Activated T-helper 1 cell treated with anti-CD3 and anti-CD28 coated beads, Interleukin-12 subunit alpha, Interleukin-12 subunit beta, Interleukin-2, Interleukin-4 antibody, amounts not matched to agents 30 ng/mL and 10 ng/mL and 1 ng/mL, durations not matched to agents 14 hours and 24 hours and 36 hours (primary cell): ENCODE measurements at regions of chr5 and their contacts with region 1.

Region 1: DNA sequence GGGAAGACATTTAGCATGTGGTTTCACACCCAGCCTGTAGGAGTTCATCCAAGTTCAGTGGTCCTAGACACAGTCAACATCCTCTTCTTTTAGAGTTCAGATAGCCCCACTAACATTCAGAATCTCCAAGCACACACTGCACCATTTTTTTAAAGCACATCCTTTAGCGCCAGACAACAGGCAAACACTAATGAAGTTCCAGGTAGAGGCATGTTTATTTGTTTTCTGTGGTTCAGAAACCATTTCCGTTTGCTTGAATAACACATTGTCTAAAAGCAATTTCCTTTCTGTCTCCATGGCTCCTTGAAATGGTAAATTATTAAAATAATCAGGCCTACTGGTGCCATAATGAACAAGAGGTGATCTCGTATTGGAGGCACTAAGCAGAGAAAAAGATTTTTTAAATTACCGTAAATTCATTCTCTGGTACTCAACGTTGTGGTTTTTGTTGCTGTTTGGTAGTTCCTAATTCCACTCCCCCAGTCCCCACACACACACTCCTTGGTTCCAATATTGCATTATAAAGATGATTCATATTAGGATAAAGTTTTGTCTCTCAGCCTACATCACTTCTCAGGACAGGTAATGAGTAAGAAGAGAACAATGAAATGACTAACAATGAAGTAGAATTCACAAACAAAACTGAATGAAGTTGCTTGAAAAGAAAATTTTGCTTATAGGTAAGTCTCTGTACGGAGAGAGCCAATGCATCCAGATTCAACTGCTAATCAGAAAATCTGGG is 153.1 kb downstream of the PCSK1 start:
- DNase-seq: peak; percentile 14
- H3K4me3 Mint-ChIP-seq: peak overlapping the region; percentile 27
- H3K27ac Mint-ChIP-seq: peak overlapping the region; percentile 56
- H3K4me1 Mint-ChIP-seq: peaks cover 40% of the 10 kb centered on the region
- H3K27me3 Mint-ChIP-seq: peaks cover 4% of the 10 kb centered on the region

Region 2: GRCh38 chr5:95927927-95928723 is 351.8 kb before region 1 on chr5:
- intact Hi-C with region 1: loop called (anchors 1 kb)
- DNase-seq: no peak
- H3K4me3 Mint-ChIP-seq: peak overlapping the region; percentile 67
- H3K27ac Mint-ChIP-seq: peak overlapping the region; percentile 89
- H3K4me1 Mint-ChIP-seq: peaks cover 79% of the 10 kb centered on the region
- H3K27me3 Mint-ChIP-seq: no peaks in the 10 kb centered on the region

Region 3: DNA sequence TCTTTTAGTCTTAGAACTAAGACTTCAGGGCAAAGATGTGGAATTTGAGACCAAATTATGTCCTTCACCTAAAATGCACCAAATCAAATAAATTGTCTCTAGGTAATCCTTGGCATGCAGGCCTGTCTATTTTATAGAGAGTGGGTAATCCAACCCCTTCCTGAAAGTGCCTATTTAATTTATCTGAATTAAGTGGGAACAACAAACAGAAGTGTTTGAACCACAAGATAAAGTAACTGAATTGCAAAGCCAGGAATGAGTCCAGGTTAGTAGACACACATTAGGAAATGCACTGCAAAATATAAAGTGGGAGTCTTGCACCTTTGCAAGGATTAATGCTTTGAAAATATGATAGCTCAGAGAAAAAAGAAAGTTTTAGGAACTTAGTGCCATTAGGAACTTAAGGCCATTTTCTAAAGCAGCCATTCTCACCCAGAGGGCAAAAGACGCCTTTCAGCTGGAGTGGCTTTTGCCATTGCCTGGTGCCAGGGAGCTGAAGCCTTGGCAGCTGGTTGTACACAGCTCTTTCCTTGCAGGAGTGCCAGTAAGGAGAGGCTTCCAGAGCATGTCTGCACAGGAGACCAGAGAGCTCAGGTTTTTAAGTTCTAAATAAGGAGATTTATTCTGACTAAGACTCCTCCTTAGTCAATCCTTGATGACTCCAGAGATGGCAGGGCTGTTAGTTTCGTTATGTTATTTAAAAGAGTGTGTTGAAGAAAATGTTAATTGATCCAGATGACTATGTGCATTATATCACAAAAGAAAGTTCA is 166.6 kb before region 1 on chr5:
- intact Hi-C with region 1: loop called (anchors 1 kb)
- DNase-seq: no peak
- H3K4me3 Mint-ChIP-seq: no peak overlapping the region
- H3K27ac Mint-ChIP-seq: peak overlapping the region; percentile 50
- H3K4me1 Mint-ChIP-seq: peaks cover 42% of the 10 kb centered on the region
- H3K27me3 Mint-ChIP-seq: no peaks in the 10 kb centered on the region

Region 4: DNA sequence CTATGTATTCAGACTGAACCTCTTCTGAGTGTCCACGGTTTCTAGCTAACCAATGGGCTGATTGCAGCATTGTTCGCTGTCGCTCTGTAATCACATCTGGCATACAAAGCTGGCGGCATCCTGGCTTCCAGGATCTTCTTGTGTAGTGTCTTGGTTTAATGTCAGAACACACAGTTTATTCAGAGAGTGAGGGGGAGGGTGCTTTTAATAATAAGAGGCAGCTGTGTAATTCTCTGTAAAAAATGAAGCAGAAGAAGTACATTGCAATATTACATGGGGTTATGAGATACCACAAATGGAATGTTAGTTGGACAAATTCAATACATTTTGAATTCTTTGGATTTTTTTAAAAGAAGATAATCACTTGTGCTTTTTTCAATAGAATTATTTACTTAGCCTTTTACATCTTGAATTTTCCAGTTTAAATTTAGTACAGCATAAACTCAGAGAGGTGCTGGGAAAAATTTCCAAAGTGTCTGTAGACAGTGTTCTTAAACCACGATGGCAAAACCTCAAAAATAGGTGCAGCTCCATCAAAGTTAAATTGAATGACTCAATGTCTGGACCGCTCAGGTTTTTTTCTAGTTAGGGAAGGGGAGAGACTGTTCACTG is 52.9 kb before region 1 on chr5:
- intact Hi-C with region 1: no loop called
- DNase-seq: no peak
- H3K4me3 Mint-ChIP-seq: no peak overlapping the region
- H3K27ac Mint-ChIP-seq: no peak overlapping the region
- H3K4me1 Mint-ChIP-seq: no peaks in the 10 kb centered on the region
- H3K27me3 Mint-ChIP-seq: peaks cover 5% of the 10 kb centered on the region

Region 5: DNA sequence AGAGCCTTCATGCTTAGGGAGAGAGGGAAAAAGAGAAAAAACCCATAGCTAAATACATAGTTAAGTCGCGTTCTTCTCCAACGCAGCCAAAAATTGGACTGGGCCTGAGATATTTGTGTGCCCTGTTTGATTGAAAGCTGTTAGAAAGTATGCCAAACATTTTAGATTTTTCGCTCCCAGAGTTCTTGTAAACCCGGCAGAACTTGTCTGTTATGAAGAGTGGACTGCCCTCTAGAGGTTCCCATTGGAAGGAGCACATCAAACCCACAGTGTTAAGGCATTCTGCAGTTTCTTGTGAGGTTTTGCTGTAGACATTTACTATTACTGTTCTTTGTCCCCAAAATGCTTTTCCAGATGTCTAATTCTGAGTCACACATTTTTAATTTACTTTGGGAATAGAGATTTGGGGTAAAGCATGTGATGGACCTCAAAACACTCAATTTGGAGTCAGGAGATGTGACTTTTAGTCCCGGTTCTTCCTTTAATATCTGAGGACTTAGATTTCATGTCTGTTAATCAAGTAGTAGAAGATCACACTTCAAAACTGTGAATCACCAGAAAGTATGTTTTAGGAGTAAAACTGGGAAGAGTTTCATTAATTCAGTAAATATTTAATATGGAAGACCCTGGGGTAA is 56.5 kb after region 1 on chr5:
- intact Hi-C with region 1: loop called (anchors 2 kb)
- DNase-seq: peak; percentile 51
- H3K4me3 Mint-ChIP-seq: no peak overlapping the region
- H3K27ac Mint-ChIP-seq: no peak overlapping the region
- H3K4me1 Mint-ChIP-seq: peaks cover 10% of the 10 kb centered on the region
- H3K27me3 Mint-ChIP-seq: peaks cover 12% of the 10 kb centered on the region

Region 6: DNA sequence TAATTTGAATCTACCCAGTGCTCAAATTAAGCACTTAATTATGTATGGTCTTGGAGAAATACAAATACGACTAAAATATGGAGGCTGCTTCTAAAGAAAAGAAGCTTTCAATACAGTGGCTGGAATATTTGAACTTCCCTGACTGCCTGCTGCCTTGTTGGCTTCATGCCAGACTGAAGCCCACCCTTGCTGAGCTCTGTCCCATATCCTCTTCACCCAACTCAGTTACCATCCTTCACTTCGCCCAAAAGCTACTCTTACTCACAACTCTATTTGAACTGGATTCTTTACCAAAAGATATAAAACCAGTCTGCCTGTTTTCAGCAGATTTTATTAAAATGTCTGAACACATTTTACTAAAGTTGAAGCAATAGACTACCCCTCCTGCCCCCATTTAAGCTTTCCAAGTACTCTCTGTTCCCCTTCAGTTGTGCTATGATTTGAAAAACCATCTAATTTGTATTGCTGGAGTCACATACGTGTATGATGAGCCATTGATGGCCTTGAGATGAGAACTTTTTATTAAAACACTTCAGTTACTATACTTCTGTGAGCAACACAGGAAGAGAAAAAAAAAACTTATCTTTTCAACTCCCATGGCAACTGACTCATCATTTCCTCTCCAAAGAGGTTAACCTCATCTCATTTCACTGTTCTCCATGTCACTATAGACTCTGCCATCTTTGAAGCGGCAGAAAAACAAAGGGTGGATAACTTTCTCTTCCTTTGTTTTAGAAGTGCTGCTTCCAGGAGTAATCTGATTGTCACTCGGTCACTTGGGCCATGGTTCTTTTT is 257.2 kb after region 1 on chr5:
- intact Hi-C with region 1: loop called (anchors 2 kb)
- DNase-seq: peak; percentile 32
- H3K4me3 Mint-ChIP-seq: no peak overlapping the region
- H3K27ac Mint-ChIP-seq: peak overlapping the region; percentile 78
- H3K4me1 Mint-ChIP-seq: peaks cover 26% of the 10 kb centered on the region
- H3K27me3 Mint-ChIP-seq: peaks cover 3% of the 10 kb centered on the region